Activated CD4-positive, alpha-beta memory T cell treated with anti-CD3 and anti-CD28 coated beads, Interleukin-2, amount 10 ng/mL, durations not matched to agents 7 days and 5 days (primary cell): ENCODE measurements at regions of chr13 and their contacts with region 1.

Region 1: DNA sequence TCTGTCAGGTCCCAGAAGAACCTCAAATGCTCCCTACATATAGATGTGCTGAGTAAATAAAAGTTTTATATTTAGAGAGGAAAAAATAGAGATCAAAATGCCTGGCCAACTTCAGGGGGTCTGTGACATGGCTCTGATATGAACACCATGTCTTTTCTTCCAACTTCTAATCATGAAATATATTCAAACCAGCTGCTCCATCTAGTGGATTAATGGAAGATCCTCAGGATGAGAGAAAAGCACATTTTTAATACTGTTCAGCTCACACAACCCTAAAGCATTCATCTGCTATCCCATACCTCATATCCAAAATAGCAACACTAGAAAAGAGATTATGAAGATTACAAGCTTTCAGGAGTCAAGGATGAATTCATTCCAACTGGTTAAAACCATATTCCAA is 56.0 kb upstream of the DOCK9 start:
- DNase-seq: no peak
- H3K4me3 Mint-ChIP-seq: no peak overlapping the region
- H3K27ac Mint-ChIP-seq: no peak overlapping the region
- H3K4me1 Mint-ChIP-seq: peaks cover 22% of the 10 kb centered on the region
- H3K27me3 Mint-ChIP-seq: no peaks in the 10 kb centered on the region

Region 2: GRCh38 chr13:98869408-98870090 is 164.3 kb before region 1 on chr13:
- CTCF ChIA-PET with region 1: interaction called, 23 read pairs
- POLR2A ChIA-PET with region 1: interaction called, 4 read pairs
- DNase-seq: no peak
- H3K4me3 Mint-ChIP-seq: no peak overlapping the region
- H3K27ac Mint-ChIP-seq: no peak overlapping the region
- H3K4me1 Mint-ChIP-seq: peaks cover 21% of the 10 kb centered on the region
- H3K27me3 Mint-ChIP-seq: no peaks in the 10 kb centered on the region

Region 3: DNA sequence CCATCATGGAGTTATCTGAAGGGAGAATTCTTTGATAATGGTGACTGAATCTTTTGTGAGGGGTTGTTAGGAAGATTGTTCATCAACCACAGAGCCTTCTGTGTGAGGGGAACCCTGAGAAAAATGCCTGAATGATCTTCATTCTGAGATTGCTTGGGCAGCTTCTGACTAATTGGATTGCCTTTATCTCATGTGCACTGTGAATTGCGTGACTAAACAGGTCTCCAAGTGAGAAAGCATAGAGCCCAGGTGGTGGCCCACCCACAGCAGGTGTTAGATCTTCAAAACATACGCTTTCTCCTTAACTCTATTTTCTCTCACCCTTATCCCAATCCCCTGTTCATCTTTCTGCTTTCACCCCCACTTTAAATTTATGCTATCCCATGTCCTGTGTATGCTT is 114.2 kb before region 1 on chr13:
- CTCF ChIA-PET with region 1: no interaction called
- POLR2A ChIA-PET with region 1: no interaction called
- DNase-seq: no peak
- H3K4me3 Mint-ChIP-seq: no peak overlapping the region
- H3K27ac Mint-ChIP-seq: peak overlapping the region; percentile 70
- H3K4me1 Mint-ChIP-seq: peaks cover 33% of the 10 kb centered on the region
- H3K27me3 Mint-ChIP-seq: no peaks in the 10 kb centered on the region

Region 4: GRCh38 chr13:99018418-99019180 is 15.2 kb before region 1 on chr13:
- CTCF ChIA-PET with region 1: interaction called, 10 read pairs
- POLR2A ChIA-PET with region 1: no interaction called
- DNase-seq: no peak
- H3K4me3 Mint-ChIP-seq: no peak overlapping the region
- H3K27ac Mint-ChIP-seq: no peak overlapping the region
- H3K4me1 Mint-ChIP-seq: peaks cover 30% of the 10 kb centered on the region
- H3K27me3 Mint-ChIP-seq: no peaks in the 10 kb centered on the region

Region 5: GRCh38 chr13:99045396-99045795 is 11.6 kb after region 1 on chr13:
- CTCF ChIA-PET with region 1: interaction called, 13 read pairs
- POLR2A ChIA-PET with region 1: interaction called, 10 read pairs
- DNase-seq: no peak
- H3K4me3 Mint-ChIP-seq: peak overlapping the region; percentile 68
- H3K27ac Mint-ChIP-seq: peak overlapping the region; percentile 97
- H3K4me1 Mint-ChIP-seq: peaks cover 94% of the 10 kb centered on the region
- H3K27me3 Mint-ChIP-seq: no peaks in the 10 kb centered on the region

Region 6: DNA sequence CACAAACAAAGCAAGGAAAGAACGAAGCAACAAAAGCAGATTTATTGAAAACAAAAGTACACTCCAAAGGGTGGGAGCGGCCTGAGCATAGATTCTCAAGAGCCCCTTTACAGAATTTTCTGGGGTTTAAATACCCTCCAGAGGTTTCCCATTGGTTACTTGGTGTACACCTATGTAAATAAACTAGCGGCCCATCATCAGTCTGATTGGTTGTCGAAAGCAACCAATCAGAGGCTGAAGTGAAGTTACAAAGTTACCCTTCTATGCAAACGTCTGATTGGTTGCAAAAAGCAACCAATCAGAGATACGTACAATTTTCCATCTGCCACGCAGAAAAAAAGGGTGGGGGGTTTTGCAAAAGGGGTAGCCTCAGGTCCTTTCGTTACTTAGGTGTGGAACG is 70.6 kb after region 1 on chr13:
- CTCF ChIA-PET with region 1: no interaction called
- POLR2A ChIA-PET with region 1: no interaction called
- DNase-seq: no peak
- H3K4me3 Mint-ChIP-seq: no peak overlapping the region
- H3K27ac Mint-ChIP-seq: no peak overlapping the region
- H3K4me1 Mint-ChIP-seq: no peaks in the 10 kb centered on the region
- H3K27me3 Mint-ChIP-seq: peaks cover 13% of the 10 kb centered on the region

Region 7: DNA sequence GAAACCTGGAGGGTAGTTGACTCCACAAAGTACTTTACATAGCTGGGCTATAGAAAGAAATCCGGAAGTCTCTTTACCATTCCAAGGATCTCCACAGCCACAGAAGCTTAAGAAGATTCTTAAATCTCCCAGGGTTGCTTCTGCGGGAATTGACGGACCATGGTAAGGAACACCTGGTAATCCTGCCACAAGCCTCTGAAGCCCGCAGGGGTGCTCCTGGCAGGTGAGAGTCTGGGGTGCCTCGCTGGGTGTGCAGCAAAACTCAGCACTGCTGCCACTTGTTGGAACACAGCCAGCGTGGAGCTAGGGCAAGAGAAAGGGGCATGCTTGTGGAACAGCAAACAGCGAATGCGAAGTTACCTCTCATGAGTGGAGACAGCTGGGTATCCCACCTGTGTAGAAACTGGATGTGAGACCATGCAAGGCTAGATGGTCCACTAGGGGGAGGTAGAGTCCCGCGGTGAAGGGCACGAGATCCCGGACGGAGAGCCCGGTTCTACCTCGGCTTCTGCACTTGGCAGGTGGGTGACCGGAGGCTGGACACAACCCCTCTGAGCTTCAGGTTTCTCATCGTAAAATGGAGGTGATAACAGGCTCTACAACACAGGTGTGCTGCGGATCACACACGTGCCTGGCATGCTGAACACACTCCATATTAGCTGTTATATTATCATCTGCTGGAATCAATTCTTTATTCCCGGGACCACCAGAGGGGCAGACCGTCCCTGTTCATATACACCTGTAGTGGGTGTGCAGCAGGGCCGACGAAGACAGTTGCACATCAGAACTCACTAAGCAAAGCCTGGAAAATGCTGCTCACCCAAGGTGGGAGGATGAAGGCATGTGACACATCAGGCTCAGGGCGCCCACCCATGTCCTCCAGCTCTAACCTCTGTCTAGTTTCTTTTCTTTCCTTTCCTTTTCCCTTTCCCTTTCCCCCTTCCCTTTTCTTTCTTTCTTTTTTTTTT is 142.8 kb after region 1 on chr13:
- CTCF ChIA-PET with region 1: interaction called, 18 read pairs
- POLR2A ChIA-PET with region 1: no interaction called
- DNase-seq: peak; percentile 79
- H3K4me3 Mint-ChIP-seq: no peak overlapping the region
- H3K27ac Mint-ChIP-seq: no peak overlapping the region
- H3K4me1 Mint-ChIP-seq: peaks cover 29% of the 10 kb centered on the region
- H3K27me3 Mint-ChIP-seq: peaks cover 10% of the 10 kb centered on the region

Region 8: GRCh38 chr13:99386911-99387788 is 353.3 kb after region 1 on chr13:
- CTCF ChIA-PET with region 1: no interaction called
- POLR2A ChIA-PET with region 1: no interaction called
- DNase-seq: peak; percentile 81
- H3K4me3 Mint-ChIP-seq: no peak overlapping the region
- H3K27ac Mint-ChIP-seq: no peak overlapping the region
- H3K4me1 Mint-ChIP-seq: peaks cover 52% of the 10 kb centered on the region
- H3K27me3 Mint-ChIP-seq: no peaks in the 10 kb centered on the region